ENCODE measurements at regions of chr7 and their contacts with region 1.

Region 1: GRCh38 chr7:116271963-116272839 is 61.9 kb downstream of the TES start:
- DNase-seq: peak in 4 of 5 donors; percentile 36 to 66 (median 41)
- ATAC-seq: peak; percentile 93 to 98 (median 96)
- H3K4me3 ChIP-seq: no peak overlapping the region
- H3K27ac ChIP-seq: peak overlapping the region in 11 of 12 donors; percentile 32 to 76 (median 51)
- H3K4me1 ChIP-seq: peaks cover 0 to 30% (median 18%) of the 10 kb centered on the region in 12 donors
- H3K27me3 ChIP-seq: no peaks in the 10 kb centered on the region
- CTCF ChIP-seq: no peak
- POLR2A ChIP-seq: no peak

Region 2: GRCh38 chr7:116311816-116312471 is 39.7 kb after region 1 on chr7:
- intact Hi-C with region 1: loop called in 2 of 10 experiments (anchors 5 kb)
- DNase-seq: no peak
- ATAC-seq: no peak
- H3K4me3 ChIP-seq: no peak overlapping the region
- H3K27ac ChIP-seq: no peak overlapping the region
- H3K4me1 ChIP-seq: peaks cover 0 to 14% (median 9%) of the 10 kb centered on the region in 12 donors
- H3K27me3 ChIP-seq: no peaks in the 10 kb centered on the region
- CTCF ChIP-seq: no peak
- POLR2A ChIP-seq: no peak

Region 3: DNA sequence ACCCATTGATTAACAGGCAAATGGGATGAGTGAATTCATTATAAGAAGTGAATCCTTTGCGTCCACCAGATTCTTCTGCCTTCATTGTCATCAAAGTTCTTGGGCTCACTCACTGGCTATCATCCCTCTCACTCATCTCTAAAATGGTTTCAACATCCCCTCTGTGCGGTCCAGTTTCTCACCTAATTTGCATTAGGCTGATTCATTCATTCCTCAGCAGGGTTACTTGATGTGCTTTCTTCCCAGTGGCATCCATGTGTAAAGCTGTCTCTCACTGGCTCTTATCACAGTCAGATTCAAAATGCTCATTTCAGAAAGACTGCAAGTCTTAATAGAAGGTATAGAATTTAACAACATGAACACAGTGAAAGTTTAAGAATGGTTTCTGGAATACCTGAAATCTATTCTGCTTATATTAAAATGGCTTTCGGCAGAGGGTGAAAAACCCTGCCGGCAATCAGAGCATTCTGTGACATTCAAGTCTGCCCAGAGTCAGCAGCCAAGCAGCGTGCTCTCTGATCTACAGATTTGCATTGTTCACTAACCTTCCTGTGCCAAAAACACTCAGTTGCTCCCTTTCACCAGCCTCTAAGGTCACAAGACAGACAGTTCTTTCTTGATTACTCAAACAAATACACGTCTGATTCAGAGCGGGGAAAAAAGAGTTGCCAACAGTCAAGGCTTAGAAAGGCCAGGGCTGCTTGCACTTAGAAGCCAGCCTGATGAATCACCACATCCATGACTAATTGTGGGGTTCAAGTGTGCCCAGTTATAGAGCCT is 44.8 kb after region 1 on chr7:
- intact Hi-C with region 1: loop called in 3 of 10 experiments (anchors 5 to 10 kb)
- DNase-seq: peak; percentile 25 to 69 (median 40)
- ATAC-seq: peak; percentile 87 to 95 (median 92)
- H3K4me3 ChIP-seq: peak overlapping the region in 3 of 12 donors; percentile 2 to 23 (median 6)
- H3K27ac ChIP-seq: peak overlapping the region; percentile 41 to 81 (median 68)
- H3K4me1 ChIP-seq: peaks cover 0 to 23% (median 14%) of the 10 kb centered on the region in 12 donors
- H3K27me3 ChIP-seq: no peaks in the 10 kb centered on the region
- CTCF ChIP-seq: no peak
- POLR2A ChIP-seq: no peak